HCT116 (cell line): ENCODE measurements at regions of chr1 and their contacts with region 1.

Region 1: GRCh38 chr1:211654838-211655787 is 20.3 kb downstream of the NEK2 start:
- DNase-seq: peak; percentile 67
- ATAC-seq: peak; percentile 93
- H3K4me3 ChIP-seq: no peak overlapping the region
- H3K27ac ChIP-seq: no peak overlapping the region
- H3K4me1 ChIP-seq: peaks cover 11 to 28% of the 10 kb centered on the region in 2 experiments; a peak in 3 of 4 replicates
- H3K27me3 ChIP-seq: no peaks in the 10 kb centered on the region
- CTCF ChIP-seq: peak; percentile 91 to 98 (median 92)
- POLR2A ChIP-seq: no peak
- RAD21 ChIP-seq: peak; percentile 99

Region 2: DNA sequence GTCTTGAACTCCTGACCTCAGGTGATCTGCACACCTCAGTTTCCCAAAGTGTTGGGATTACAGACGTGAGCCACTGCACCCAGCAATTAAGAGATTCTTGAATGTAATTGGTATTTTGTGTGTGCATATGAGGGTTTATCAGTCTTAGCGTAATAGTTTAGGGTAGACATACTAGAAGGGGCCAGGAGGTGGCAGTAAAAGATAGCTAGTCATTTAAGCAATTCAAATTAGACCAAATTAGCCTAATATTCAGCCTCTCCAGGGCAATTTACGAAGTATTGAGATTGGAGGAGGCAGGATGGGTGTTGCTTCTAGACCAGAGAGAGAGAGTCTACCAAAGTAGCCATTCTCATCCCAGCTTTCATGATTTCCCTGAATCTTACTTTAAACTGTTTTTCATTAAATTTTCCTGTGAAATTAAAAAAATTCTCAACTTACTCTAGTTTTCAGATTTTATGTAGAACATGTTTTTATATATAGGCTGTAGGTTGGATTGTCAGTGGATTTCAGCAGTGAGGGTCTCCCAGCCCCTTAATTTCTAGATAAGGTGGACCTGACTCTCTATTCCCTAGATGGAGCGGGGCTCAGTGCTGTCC is 1206.7 kb before region 1 on chr1:
- CTCF ChIA-PET with region 1: no interaction called
- POLR2A ChIA-PET with region 1: no interaction called
- RAD21 ChIA-PET with region 1: no interaction called
- intact Hi-C with region 1: loop called (anchors 2 kb)
- DNase-seq: peak; percentile 33
- ATAC-seq: peak; percentile 87
- H3K4me3 ChIP-seq: no peak overlapping the region
- H3K27ac ChIP-seq: no peak overlapping the region
- H3K4me1 ChIP-seq: peaks cover 4% of the 10 kb centered on the region in 2 experiments; a peak in 2 of 4 replicates
- H3K27me3 ChIP-seq: peaks cover 34% of the 10 kb centered on the region
- CTCF ChIP-seq: peak; percentile 56 to 73 (median 59); a peak in 5 of 6 replicates
- POLR2A ChIP-seq: no peak
- RAD21 ChIP-seq: peak; percentile 79

Region 3: GRCh38 chr1:211133836-211134669 is 521.1 kb before region 1 on chr1 and contains the start of gene KCNH1:
- CTCF ChIA-PET with region 1: no interaction called
- POLR2A ChIA-PET with region 1: no interaction called
- RAD21 ChIA-PET with region 1: no interaction called
- intact Hi-C with region 1: loop called (anchors 1 kb)
- DNase-seq: peak; percentile 46
- ATAC-seq: peak; percentile 91
- H3K4me3 ChIP-seq: no peak within 1 kb of the TSS
- H3K27ac ChIP-seq: no peak within 1 kb of the TSS
- H3K4me1 ChIP-seq: peaks cover 0 to 4% of the 10 kb centered on the region in 2 experiments; a peak in 2 of 4 replicates
- H3K27me3 ChIP-seq: peaks cover 66% of the 10 kb centered on the region
- CTCF ChIP-seq: peak; percentile 78 to 97 (median 90)
- POLR2A ChIP-seq: no peak
- RAD21 ChIP-seq: peak; percentile 94
- total RNA-seq, gene KCNH1: not detected

Region 4: GRCh38 chr1:211323156-211324063 is 331.7 kb before region 1 on chr1:
- CTCF ChIA-PET with region 1: interaction called, 3 read pairs
- POLR2A ChIA-PET with region 1: no interaction called
- RAD21 ChIA-PET with region 1: interaction called in 1 of 2 experiments, 5 read pairs
- intact Hi-C with region 1: loop called (anchors 1 kb)
- DNase-seq: no peak
- ATAC-seq: peak; percentile 81
- H3K4me3 ChIP-seq: no peak overlapping the region
- H3K27ac ChIP-seq: no peak overlapping the region
- H3K4me1 ChIP-seq: peaks cover 0 to 26% of the 10 kb centered on the region in 2 experiments; a peak in 3 of 4 replicates
- H3K27me3 ChIP-seq: no peaks in the 10 kb centered on the region
- CTCF ChIP-seq: peak; percentile 80 to 82 (median 82)
- POLR2A ChIP-seq: no peak
- RAD21 ChIP-seq: peak; percentile 90

Region 5: DNA sequence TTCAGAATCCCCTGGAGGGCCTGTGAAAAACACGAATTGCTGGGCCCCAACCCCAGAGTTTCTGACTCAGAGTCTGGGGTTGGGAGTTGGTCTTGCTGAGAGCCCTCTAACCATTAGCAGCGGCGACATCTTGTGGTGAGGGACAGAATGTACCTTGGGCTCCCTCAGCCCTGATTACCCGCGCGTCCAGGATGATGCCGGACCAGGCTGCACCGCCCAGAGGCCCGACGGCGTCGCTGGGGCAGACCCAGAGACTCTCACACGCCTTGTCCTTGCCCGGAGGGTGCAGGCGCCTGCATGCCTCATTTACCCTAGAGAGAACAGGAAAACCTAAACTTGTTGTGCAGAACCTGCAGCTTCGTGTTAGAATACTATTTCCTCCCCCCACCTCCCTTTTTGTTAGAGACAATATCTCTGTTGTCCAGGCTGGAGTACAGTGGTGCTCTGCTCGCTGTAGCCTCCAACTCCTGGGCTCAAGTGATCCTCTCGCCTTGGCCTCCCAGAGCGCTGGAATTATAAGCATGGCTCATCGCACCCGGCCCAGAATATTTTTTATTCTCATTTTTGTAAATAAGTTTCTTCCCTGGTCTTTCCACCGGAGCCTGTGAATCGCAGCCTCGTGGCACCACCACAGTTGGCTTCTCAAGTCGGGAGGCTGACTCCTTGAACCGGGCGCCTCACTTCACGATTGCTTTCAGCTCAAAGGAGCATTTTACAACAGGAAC is 140.9 kb before region 1 on chr1:
- CTCF ChIA-PET with region 1: interaction called, 41 read pairs
- POLR2A ChIA-PET with region 1: no interaction called
- RAD21 ChIA-PET with region 1: interaction called in 1 of 2 experiments, 4 read pairs
- intact Hi-C with region 1: loop called (anchors 1 kb)
- DNase-seq: peak; percentile 71
- ATAC-seq: peak; percentile 76
- H3K4me3 ChIP-seq: peak overlapping the region in 1 of 2 experiments; percentile 26; a peak in 1 of 4 replicates
- H3K27ac ChIP-seq: peak overlapping the region; percentile 51; the same call in 1 of the 2 replicates
- H3K4me1 ChIP-seq: peaks cover 36 to 46% of the 10 kb centered on the region in 2 experiments
- H3K27me3 ChIP-seq: no peaks in the 10 kb centered on the region
- CTCF ChIP-seq: peak; percentile 74 to 88 (median 80)
- POLR2A ChIP-seq: no peak
- RAD21 ChIP-seq: peak; percentile 96

Region 6: DNA sequence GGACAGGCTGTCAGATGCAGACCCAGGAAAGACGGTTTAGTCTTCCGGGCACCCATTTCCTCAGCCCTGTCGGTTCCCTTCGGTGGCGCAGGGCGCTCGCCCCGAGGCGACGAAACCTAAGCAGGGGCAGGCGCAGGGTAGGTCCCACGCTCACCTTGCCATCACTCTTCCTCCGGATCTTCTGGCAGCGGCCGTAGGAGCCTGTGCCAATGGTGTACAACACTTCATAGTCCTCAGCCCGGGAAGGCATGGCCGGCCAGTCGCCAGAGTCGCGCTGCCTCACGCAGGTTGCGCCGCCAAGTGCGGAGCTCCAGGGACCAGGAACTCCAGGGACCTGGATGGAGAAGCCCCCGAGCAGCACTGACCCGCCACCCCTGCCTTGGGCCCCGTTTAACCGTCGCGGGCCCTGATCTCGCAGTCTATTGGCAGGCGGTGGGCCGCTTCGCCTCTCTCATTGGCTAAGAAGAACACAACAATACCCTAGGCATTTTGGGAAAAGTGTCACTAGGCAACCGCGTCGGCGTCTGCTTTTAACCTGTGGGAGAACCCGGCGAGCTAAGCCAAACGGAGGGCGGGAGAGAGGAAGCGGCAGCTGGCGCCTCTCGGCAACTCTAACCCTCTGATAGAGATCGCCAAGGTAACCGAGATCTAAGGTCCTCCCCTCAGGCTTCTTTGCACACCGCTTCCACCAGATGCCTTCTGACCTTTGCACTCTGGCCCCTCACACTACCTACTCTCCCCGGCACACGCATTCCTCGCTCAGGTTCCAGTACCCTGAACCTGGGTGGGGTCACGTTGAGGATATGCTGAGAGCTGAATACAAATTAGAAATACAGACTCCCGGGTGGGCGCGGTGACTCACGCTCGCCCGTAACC is 20.4 kb after region 1 on chr1 and contains the start of gene NEK2:
- CTCF ChIA-PET with region 1: no interaction called
- POLR2A ChIA-PET with region 1: no interaction called
- RAD21 ChIA-PET with region 1: no interaction called
- intact Hi-C with region 1: no loop called
- DNase-seq: peak; percentile 94
- ATAC-seq: peak; percentile 96
- H3K4me3 ChIP-seq: peak within 1 kb of the TSS; percentile 96
- H3K27ac ChIP-seq: peak within 1 kb of the TSS; percentile 53
- H3K4me1 ChIP-seq: peaks cover 4 to 19% of the 10 kb centered on the region in 2 experiments; a peak in 3 of 4 replicates
- H3K27me3 ChIP-seq: no peaks in the 10 kb centered on the region
- CTCF ChIP-seq: no peak
- POLR2A ChIP-seq: peak; percentile 65
- RAD21 ChIP-seq: no peak
- total RNA-seq, gene NEK2: 50.2 TPM